HepG2 (cell line): ENCODE measurements at regions of chr10 and their contacts with region 1.

Region 1: GRCh38 chr10:44981172-44982113 is 2.8 kb upstream of the DEPP1 start:
- DNase-seq: peak; percentile 86
- ATAC-seq: peak; percentile 43
- H3K4me3 ChIP-seq: peak overlapping the region in 2 of 3 experiments; percentile 12 to 24; a peak in 2 of 6 replicates
- H3K27ac ChIP-seq: peak overlapping the region; percentile 97
- H3K4me1 ChIP-seq: peaks cover 69% of the 10 kb centered on the region
- H3K27me3 ChIP-seq: no peaks in the 10 kb centered on the region; a peak in 1 of 5 replicates
- CTCF ChIP-seq: no peak
- EP300 ChIP-seq: no peak
- POLR2A ChIP-seq: no peak
- RAD21 ChIP-seq: no peak

Region 2: DNA sequence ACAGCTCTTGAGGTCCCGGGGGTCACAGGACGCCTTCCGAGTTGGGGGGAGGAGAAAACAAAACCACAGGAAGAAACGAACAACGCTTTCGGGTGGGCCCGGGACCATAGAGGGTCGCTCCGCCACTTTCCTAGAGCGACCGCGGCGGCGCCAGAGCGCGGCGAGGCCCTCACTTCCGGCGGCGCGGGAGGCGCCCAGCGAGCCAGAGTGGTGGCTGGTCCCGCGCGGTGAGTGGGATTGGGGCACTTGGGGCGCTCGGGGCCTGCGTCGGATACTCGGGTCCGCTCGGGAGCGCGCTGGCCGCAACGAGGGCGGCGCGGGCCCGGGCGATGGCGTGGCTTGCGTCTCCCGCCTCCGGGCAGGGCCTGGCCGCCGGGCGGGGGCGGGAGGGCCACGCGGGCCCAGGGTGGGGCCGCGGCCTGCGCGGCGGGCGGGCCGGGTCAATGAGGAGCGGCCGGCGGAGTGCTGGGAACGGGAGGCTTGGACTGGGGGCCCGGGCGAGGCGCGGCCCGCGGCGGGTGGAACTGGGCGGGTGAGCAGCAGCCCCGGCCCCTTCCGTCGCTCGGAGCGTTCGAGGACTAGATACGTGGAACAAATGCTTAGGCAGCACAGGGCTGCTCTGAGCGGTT is 19.4 kb after region 1 on chr10 and contains the start of gene ZNF22:
- CTCF ChIA-PET with region 1: no interaction called
- POLR2A ChIA-PET with region 1: interaction called, 863 read pairs
- in situ Hi-C with region 1: no loop called
- intact Hi-C with region 1: loop called (anchors 1 kb)
- DNase-seq: no peak
- ATAC-seq: no peak
- H3K4me3 ChIP-seq: no peak within 1 kb of the TSS
- H3K27ac ChIP-seq: peak within 1 kb of the TSS; percentile 31
- H3K4me1 ChIP-seq: peaks cover 95% of the 10 kb centered on the region
- H3K27me3 ChIP-seq: no peaks in the 10 kb centered on the region
- CTCF ChIP-seq: no peak
- EP300 ChIP-seq: no peak
- POLR2A ChIP-seq: no peak
- RAD21 ChIP-seq: no peak
- total RNA-seq, gene ZNF22: 0.40 and 0.58 TPM in 2 replicates

Region 3: DNA sequence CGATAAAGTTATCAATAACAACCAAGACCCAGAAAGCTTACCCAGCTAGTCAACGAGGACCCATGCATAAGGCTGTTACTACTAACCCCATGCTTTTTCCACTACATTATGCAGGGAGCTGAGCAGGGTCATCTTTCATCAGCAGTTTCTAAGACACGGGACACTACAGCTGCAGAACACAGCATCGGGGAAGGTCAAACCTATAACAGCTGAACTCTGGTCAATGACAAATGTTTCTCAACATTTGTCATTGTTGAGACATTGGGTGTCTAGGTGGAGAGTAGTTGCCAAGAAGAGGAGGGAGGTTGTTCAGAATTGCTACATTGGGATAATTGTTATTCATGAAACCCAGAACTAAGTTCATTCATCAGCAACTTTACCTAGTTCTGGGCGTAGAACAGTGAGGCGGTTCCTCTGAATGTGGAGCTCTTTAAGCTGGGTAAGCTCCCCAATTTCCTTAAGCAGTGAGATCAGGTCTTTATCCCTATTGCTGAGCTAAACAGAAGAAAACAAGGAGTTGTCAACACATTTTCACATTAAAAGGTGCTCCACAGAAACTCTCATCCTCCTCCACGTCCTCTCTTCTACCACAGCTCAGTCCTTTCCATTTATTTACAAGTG is 124.9 kb after region 1 on chr10:
- CTCF ChIA-PET with region 1: no interaction called
- POLR2A ChIA-PET with region 1: no interaction called
- in situ Hi-C with region 1: no loop called
- intact Hi-C with region 1: no loop called
- DNase-seq: no peak
- ATAC-seq: peak; percentile 43; the same call in 1 of the 3 replicates
- H3K4me3 ChIP-seq: no peak overlapping the region
- H3K27ac ChIP-seq: no peak overlapping the region
- H3K4me1 ChIP-seq: no peaks in the 10 kb centered on the region
- H3K27me3 ChIP-seq: peaks cover 0 to 5% of the 10 kb centered on the region in 2 experiments; a peak in 2 of 5 replicates
- CTCF ChIP-seq: no peak
- EP300 ChIP-seq: no peak
- POLR2A ChIP-seq: no peak
- RAD21 ChIP-seq: no peak